IMR-90 (cell line): ENCODE measurements at regions of chr5 and their contacts with region 1.

Region 1: GRCh38 chr5:39057734-39058133 is 16.5 kb downstream of the RICTOR start:
- DNase-seq: no peak
- ATAC-seq: no peak
- H3K4me3 ChIP-seq: peak overlapping the region; percentile 38; the same call in 1 of the 2 replicates
- H3K27ac ChIP-seq: no peak overlapping the region
- H3K4me1 ChIP-seq: peaks cover 3% of the 10 kb centered on the region; the same call in 1 of the 2 replicates
- H3K27me3 ChIP-seq: no peaks in the 10 kb centered on the region
- CTCF ChIP-seq: no peak
- POLR2A ChIP-seq: no peak
- RAD21 ChIP-seq: no peak

Region 2: GRCh38 chr5:39040875-39041274 is 16.9 kb before region 1 on chr5:
- CTCF ChIA-PET with region 1: no interaction called
- POLR2A ChIA-PET with region 1: no interaction called
- dilution Hi-C with region 1: no loop called
- in situ Hi-C with region 1: no loop called
- intact Hi-C with region 1: loop called (anchors 2 kb)
- DNase-seq: no peak
- ATAC-seq: no peak
- H3K4me3 ChIP-seq: no peak overlapping the region
- H3K27ac ChIP-seq: no peak overlapping the region
- H3K4me1 ChIP-seq: peaks cover 3% of the 10 kb centered on the region; the same call in 1 of the 2 replicates
- H3K27me3 ChIP-seq: no peaks in the 10 kb centered on the region
- CTCF ChIP-seq: no peak
- POLR2A ChIP-seq: no peak
- RAD21 ChIP-seq: no peak

Region 3: GRCh38 chr5:39264528-39264927 is 206.8 kb after region 1 on chr5:
- CTCF ChIA-PET with region 1: no interaction called
- POLR2A ChIA-PET with region 1: no interaction called
- dilution Hi-C with region 1: no loop called
- in situ Hi-C with region 1: no loop called
- intact Hi-C with region 1: no loop called
- DNase-seq: no peak
- ATAC-seq: no peak
- H3K4me3 ChIP-seq: no peak overlapping the region
- H3K27ac ChIP-seq: no peak overlapping the region
- H3K4me1 ChIP-seq: no peaks in the 10 kb centered on the region
- H3K27me3 ChIP-seq: no peaks in the 10 kb centered on the region
- CTCF ChIP-seq: no peak
- POLR2A ChIP-seq: no peak
- RAD21 ChIP-seq: no peak